CD14-positive monocyte (primary cell): ENCODE measurements at regions of chr2 and their contacts with region 1.

Region 1: GRCh38 chr2:240143801-240144648 is 3.6 kb upstream of the OTOS start:
- DNase-seq: peak; percentile 42 to 58 (median 56)
- H3K4me3 ChIP-seq: no peak overlapping the region
- H3K4me3 Mint-ChIP-seq: no peak overlapping the region
- H3K27ac ChIP-seq: no peak overlapping the region
- H3K27ac Mint-ChIP-seq: no peak overlapping the region
- H3K4me1 ChIP-seq: no peaks in the 10 kb centered on the region
- H3K4me1 Mint-ChIP-seq: peaks cover 4% of the 10 kb centered on the region
- H3K27me3 ChIP-seq: no peaks in the 10 kb centered on the region
- H3K27me3 Mint-ChIP-seq: peaks cover 2 to 9% (median 8%) of the 10 kb centered on the region in 3 donors
- CTCF ChIP-seq: peak; percentile 94

Region 2: DNA sequence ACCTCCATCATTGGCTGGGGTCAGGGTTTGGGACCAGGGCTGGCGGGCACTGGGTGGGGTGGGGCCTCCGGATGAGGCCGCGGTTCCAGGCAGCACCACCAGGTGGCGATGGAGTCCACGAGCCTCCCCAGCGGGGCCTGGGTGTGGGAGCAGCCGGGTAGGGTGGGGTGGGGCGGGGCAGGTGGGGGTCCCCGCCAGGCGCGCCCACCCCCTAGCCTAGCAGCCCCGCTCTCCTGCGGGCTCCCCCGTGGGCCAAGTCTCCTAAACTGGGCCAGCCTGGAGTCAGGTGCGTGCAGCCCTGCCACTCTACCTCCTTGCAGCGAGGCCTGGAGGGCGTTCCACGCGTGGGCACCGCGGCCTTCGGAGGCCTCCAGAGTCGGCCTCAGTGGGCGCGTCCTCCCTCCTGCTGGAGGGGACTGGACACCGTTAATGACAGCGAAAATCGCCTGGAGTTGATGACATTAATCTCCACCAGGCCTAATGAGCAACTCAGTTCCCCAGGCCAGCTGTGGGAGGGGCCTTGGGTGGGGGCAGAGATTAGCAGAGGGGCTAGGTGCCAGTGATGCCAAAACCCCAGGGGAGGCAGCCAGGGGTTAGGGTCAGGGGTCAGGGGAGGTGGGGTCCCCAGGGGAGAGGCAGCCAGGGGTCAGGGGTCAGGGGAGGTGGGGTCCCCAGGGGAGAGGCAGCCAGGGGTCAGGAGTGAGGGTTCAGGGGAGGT is 1108.5 kb before region 1 on chr2:
- intact Hi-C with region 1: loop called (anchors 2 kb)
- DNase-seq: peak; percentile 21 to 40 (median 34)
- H3K4me3 ChIP-seq: no peak overlapping the region
- H3K4me3 Mint-ChIP-seq: no peak overlapping the region
- H3K27ac ChIP-seq: no peak overlapping the region
- H3K27ac Mint-ChIP-seq: no peak overlapping the region
- H3K4me1 ChIP-seq: no peaks in the 10 kb centered on the region
- H3K4me1 Mint-ChIP-seq: no peaks in the 10 kb centered on the region
- H3K27me3 ChIP-seq: peaks cover 0 to 15% of the 10 kb centered on the region in 2 donors
- H3K27me3 Mint-ChIP-seq: peaks cover 3 to 28% (median 17%) of the 10 kb centered on the region in 3 donors
- CTCF ChIP-seq: peak; percentile 96

Region 3: DNA sequence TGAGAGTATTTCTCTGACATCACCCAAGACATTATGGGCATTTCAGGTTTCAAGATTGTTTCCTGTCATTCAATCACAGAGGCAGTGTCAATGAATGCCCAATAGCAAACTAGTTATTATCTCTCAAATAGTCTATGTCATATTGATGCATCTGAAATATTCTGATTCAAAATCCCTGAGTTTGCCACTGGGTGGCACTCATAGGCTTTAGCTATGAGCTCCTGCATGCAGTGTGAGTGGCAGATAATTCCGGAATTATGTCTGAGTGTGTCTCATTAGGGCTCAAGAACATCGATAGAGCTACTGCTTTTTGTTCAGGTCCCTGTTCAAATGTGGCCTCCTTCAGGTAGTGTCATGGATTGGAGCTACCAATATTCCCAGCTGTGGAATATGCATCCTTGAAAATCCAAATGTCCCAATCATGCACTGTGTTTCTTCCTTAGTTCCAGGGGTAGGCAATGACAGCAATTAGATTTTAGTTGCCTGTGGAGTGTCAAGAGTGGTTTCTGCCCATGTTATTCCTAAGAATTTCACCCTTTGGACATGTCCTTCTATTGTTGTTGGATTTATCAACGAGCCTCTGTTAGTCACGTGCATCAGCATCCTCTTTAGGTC is 82.9 kb before region 1 on chr2:
- intact Hi-C with region 1: loop called (anchors 2 kb)
- DNase-seq: peak in 2 of 3 donors; percentile 3 to 27
- H3K4me3 ChIP-seq: no peak overlapping the region
- H3K4me3 Mint-ChIP-seq: no peak overlapping the region
- H3K27ac ChIP-seq: no peak overlapping the region
- H3K27ac Mint-ChIP-seq: no peak overlapping the region
- H3K4me1 ChIP-seq: no peaks in the 10 kb centered on the region
- H3K4me1 Mint-ChIP-seq: no peaks in the 10 kb centered on the region
- H3K27me3 ChIP-seq: peaks cover 8 to 16% of the 10 kb centered on the region in 2 donors
- H3K27me3 Mint-ChIP-seq: peaks cover 2 to 26% (median 3%) of the 10 kb centered on the region in 3 donors
- CTCF ChIP-seq: peak; percentile 48